Left cardiac atrium (tissue), 4 donors: ENCODE measurements at regions of chr19 and their contacts with region 1.

Region 1: GRCh38 chr19:12495002-12495802 is 10.6 kb upstream of the ZNF709 start:
- DNase-seq: peak; percentile 95
- ATAC-seq: peak; percentile 100

Region 2: DNA sequence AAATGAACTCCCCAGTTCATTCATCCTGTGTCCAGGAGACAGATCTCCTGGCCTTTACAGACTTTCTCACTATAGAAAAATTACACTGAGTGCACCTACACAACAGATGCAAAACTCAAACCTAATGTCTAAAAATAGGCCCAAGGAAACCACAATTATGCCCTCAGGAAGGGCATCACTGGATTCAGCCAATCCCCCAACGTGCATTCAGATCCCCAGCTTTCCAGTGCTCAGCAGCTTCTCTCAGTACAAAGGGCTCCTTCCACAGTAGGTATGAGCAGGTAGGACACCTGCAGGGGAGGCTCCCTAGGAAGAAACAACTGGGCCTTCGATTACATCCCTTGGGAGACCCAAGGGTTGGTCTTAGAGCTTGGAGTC is 12.7 kb before region 1 on chr19:
- intact Hi-C with region 1: loop called in 1 of 2 experiments (anchors 2 kb)
- DNase-seq: no peak
- ATAC-seq: no peak

Region 3: DNA sequence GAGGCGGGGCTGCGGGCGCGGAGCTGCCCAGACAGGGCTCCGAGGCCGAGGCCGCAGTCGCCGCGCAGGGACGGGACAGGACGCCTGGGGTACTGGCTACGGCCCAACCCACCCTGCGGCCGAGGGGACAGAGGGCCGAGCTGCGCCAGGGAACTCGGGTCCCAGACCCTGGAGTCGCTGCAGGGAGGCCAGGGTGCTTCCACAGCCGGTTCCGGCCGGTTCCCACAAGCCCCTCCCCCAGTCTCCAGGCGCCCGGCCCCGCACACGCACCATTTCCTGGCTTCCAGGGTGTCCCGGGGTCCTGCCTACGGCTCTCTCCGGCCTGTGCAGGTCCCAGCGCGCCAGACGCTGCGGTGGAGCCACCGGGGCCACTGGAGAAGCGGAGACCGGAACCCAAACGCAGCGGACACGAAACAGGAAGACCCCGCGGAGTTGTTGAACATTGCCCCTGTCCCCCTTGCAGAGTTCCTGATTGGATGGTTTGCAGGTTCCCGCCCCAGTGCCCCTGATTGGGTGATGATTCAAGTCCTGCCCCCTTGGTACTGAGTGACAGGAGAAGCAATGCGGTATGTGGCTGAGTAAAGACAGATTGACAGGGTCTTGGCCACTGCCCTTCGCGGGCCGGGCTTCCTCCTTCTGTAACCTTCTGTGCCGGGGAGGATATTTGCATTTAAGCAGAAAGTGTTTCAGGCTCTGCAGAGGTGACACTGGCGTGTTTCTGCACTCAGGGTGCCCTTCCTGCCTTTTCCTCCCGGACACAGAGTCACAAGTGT is 56.0 kb after region 1 on chr19 and contains the start of gene ZNF564:
- intact Hi-C with region 1: loop called in 1 of 2 experiments (anchors 5 kb)
- DNase-seq: peak; percentile 95
- ATAC-seq: peak; percentile 99
- total RNA-seq, gene ZNF564: 7.7 to 11.9 TPM